CD4-positive, alpha-beta memory T cell (primary cell): ENCODE measurements at regions of chr5 and their contacts with region 1.

Region 1: DNA sequence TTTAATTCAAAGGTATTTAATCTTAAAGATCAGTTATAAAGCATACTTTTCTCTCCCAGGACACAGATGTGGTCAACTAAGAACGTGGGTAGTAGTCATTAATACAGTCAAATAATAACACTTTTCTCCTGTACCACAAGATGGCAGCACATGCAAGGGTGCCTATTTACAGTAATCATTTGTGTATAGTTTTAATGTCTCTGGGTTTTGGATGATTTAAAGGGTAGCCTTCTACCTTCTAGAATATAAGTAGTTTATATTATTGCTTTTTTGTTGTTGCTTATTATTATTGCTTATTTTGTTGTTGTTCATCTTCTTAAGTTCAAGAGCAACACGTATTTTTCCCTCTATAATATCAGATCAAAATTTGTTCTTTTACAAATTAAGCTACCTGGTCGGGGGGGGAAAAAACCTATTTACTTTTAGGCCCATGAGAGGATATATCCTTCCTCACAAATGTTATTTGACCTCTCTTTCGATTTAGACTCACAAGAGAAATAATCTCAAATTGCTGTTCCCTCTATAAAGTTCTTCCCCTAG is 59.6 kb upstream of the SLC27A6 start:
- DNase-seq: peak; percentile 36 to 49 (median 43)
- H3K4me3 ChIP-seq: no peak overlapping the region
- H3K4me3 Mint-ChIP-seq: no peak overlapping the region
- H3K27ac ChIP-seq: no peak overlapping the region
- H3K27ac Mint-ChIP-seq: no peak overlapping the region
- H3K4me1 ChIP-seq: no peaks in the 10 kb centered on the region
- H3K4me1 Mint-ChIP-seq: no peaks in the 10 kb centered on the region
- H3K27me3 ChIP-seq: no peaks in the 10 kb centered on the region
- H3K27me3 Mint-ChIP-seq: no peaks in the 10 kb centered on the region

Region 2: DNA sequence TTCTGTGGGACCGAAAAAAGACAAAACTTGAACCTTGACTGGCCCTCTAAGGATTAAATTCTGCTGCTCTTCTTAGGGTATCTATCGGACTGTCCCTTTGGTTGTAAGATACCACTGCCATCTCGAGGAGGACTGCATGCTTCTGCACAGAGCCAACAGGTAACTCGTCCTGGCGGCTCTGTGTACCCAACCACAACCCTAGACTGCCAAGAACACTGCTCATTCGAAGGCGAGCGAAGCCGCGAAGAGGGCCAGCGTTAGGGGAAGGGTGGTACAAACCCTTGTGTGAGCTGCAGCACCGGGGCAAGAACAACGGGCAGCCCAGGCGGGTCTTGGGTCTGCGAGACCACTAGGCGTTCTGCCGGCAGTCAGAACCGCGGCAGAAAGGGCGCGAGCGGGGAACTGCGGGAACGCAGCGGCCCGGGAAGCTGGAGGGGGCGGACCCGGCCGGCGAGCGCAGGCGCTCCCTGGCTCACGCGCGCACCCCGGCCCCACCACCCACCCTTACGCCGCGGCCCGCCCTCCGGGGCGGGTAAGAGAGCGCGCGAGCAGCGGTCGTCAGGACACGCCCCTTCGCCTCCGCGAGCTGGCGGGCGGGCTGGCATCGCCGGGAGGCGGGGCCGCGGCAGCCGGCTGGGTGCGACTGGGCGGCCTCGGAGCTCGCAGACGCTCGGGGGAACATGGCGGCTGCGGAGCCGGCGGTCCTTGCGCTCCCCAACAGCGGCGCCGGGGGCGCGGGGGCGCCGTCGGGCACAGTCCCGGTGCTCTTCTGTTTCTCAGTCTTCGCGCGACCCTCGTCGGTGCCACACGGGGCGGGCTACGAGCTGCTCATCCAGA is 188.7 kb after region 1 on chr5 and contains the start of gene ISOC1:
- CTCF ChIA-PET with region 1: interaction called, 12 read pairs
- POLR2A ChIA-PET with region 1: no interaction called
- intact Hi-C with region 1: loop called (anchors 1 kb)
- DNase-seq: peak; percentile 88 to 95 (median 93)
- H3K4me3 ChIP-seq: peak within 1 kb of the TSS; percentile 69 to 83
- H3K4me3 Mint-ChIP-seq: peak within 1 kb of the TSS; percentile 89 to 94 (median 92)
- H3K27ac ChIP-seq: peak within 1 kb of the TSS; percentile 65
- H3K27ac Mint-ChIP-seq: peak within 1 kb of the TSS; percentile 85 to 93 (median 92)
- H3K4me1 ChIP-seq: peaks cover 41% of the 10 kb centered on the region
- H3K4me1 Mint-ChIP-seq: peaks cover 22 to 39% (median 30%) of the 10 kb centered on the region in 4 donors
- H3K27me3 ChIP-seq: no peaks in the 10 kb centered on the region
- H3K27me3 Mint-ChIP-seq: peaks cover 0 to 5% of the 10 kb centered on the region in 2 donors
- total RNA-seq, gene ISOC1: 13.7 to 16.6 TPM

Region 3: DNA sequence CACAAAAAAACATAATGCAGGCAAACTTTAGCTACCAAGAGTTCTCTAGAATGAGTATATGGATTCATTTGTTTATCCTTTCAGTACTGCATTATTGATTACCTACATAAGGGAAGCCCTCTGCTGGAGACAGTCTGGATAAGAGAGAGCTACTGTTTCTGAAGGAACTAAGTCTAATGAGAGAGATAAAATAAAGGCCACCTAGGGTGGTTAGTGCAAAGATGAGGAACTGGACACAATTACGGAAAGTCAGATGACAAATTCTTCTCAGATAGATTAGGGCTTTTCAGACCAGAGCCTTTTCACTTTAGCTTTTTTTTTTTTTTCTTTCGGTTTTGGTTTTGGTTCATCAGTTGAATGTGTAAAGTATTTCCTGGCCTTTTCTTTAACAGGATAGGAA is 220.2 kb after region 1 on chr5:
- CTCF ChIA-PET with region 1: interaction called, 19 read pairs
- POLR2A ChIA-PET with region 1: no interaction called
- intact Hi-C with region 1: loop called (anchors 1 kb)
- DNase-seq: peak in 4 of 5 donors; percentile 8 to 29 (median 10)
- H3K4me3 ChIP-seq: peak overlapping the region in 1 of 2 donors; percentile 16
- H3K4me3 Mint-ChIP-seq: peak overlapping the region; percentile 69 to 90 (median 78)
- H3K27ac ChIP-seq: peak overlapping the region; percentile 35
- H3K27ac Mint-ChIP-seq: peak overlapping the region; percentile 69 to 96 (median 92)
- H3K4me1 ChIP-seq: peaks cover 12% of the 10 kb centered on the region
- H3K4me1 Mint-ChIP-seq: peaks cover 8 to 13% (median 10%) of the 10 kb centered on the region in 4 donors
- H3K27me3 ChIP-seq: no peaks in the 10 kb centered on the region
- H3K27me3 Mint-ChIP-seq: no peaks in the 10 kb centered on the region

Region 4: DNA sequence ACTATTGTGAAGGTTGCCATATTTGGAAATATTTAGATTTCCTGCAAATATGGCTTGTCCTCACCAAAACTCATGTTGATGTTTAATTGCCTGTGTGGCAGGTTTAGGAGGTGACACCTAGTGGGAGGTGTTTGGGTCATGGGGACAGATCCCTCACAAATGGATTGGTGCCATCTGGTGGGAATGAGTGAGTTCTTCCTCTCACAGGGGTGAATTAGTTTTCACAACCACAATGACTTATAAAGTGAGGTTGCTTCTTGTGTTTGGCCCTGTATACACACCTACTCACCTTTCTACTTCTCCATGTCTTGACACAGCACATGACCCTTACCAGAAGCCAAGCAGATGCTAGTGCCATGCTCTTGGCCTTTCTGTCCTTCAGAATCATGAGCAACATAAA is 230.0 kb after region 1 on chr5:
- CTCF ChIA-PET with region 1: no interaction called
- POLR2A ChIA-PET with region 1: no interaction called
- intact Hi-C with region 1: loop called (anchors 2 kb)
- DNase-seq: peak in 4 of 5 donors; percentile 6 to 10 (median 8)
- H3K4me3 ChIP-seq: no peak overlapping the region
- H3K4me3 Mint-ChIP-seq: no peak overlapping the region
- H3K27ac ChIP-seq: no peak overlapping the region
- H3K27ac Mint-ChIP-seq: no peak overlapping the region
- H3K4me1 ChIP-seq: no peaks in the 10 kb centered on the region
- H3K4me1 Mint-ChIP-seq: no peaks in the 10 kb centered on the region
- H3K27me3 ChIP-seq: no peaks in the 10 kb centered on the region
- H3K27me3 Mint-ChIP-seq: peaks cover 0 to 1% of the 10 kb centered on the region in 2 donors

Region 5: DNA sequence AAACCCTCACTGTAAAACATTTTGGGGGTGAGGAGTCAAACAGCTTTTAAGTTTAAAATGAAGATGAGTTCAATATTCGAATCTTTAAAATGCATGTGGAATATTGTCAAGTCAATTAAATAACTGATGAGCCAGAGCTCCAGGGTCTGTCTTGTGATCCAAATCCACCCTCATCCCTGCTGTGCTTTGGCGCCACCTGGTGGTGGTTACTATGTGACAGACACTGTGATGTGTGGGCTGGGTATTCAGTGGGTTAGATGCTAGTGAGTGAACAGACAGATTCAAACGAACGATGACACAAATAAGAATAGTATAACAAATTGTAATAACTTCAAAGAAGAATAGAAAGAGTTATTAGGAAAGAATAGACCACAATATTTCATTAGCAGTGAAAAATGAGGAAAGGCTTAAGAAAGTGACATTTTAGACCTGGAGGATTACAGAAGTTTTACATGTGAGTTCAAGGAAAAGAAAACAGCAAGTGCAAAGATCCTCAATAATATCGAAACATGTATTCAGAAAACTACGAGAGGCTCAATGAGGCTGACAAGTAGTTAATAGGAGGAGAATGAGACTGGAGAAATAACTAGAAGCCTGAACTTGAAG is 947.2 kb after region 1 on chr5:
- CTCF ChIA-PET with region 1: interaction called, 9 read pairs
- POLR2A ChIA-PET with region 1: no interaction called
- intact Hi-C with region 1: loop called (anchors 1 kb)
- DNase-seq: peak; percentile 34 to 45 (median 43)
- H3K4me3 ChIP-seq: no peak overlapping the region
- H3K4me3 Mint-ChIP-seq: no peak overlapping the region
- H3K27ac ChIP-seq: no peak overlapping the region
- H3K27ac Mint-ChIP-seq: no peak overlapping the region
- H3K4me1 ChIP-seq: no peaks in the 10 kb centered on the region
- H3K4me1 Mint-ChIP-seq: peaks cover 0 to 1% (median 0%) of the 10 kb centered on the region in 4 donors
- H3K27me3 ChIP-seq: no peaks in the 10 kb centered on the region
- H3K27me3 Mint-ChIP-seq: peaks cover under 1 to 3% of the 10 kb centered on the region in 2 donors